ENCODE measurements at regions of chr9 and their contacts with region 1.

Region 1: GRCh38 chr9:110058304-110058953 is 149.5 kb downstream of the C9orf152 start:
- DNase-seq: no peak
- H3K4me3 ChIP-seq: no peak overlapping the region
- H3K27me3 ChIP-seq: no peaks in the 10 kb centered on the region
- CTCF ChIP-seq: peak; percentile 34; the same call in 1 of the 2 replicates

Region 2: GRCh38 chr9:110069326-110070248 is 11.2 kb after region 1 on chr9:
- CTCF ChIA-PET with region 1: interaction called, 10 read pairs
- POLR2A ChIA-PET with region 1: no interaction called
- DNase-seq: peak; percentile 96
- H3K4me3 ChIP-seq: peak overlapping the region; percentile 0; the same call in 1 of the 2 replicates
- H3K27me3 ChIP-seq: no peaks in the 10 kb centered on the region
- CTCF ChIP-seq: no peak

Measured in BJ (cell line).